Adrenal gland (tissue), 19 donors: ENCODE measurements at regions of chr12 and their contacts with region 1.

Region 1: GRCh38 chr12:104314242-104314614 is 10.7 kb downstream of the EID3 start:
- DNase-seq: no peak
- H3K4me3 ChIP-seq: no peak overlapping the region
- H3K27ac ChIP-seq: no peak overlapping the region
- H3K4me1 ChIP-seq: peaks cover 0 to 14% of the 10 kb centered on the region in 2 donors
- H3K27me3 ChIP-seq: no peaks in the 10 kb centered on the region
- CTCF ChIP-seq: no peak
- POLR2A ChIP-seq: no peak

Region 2: GRCh38 chr12:105138248-105138647 is 824.0 kb after region 1 on chr12:
- intact Hi-C with region 1: loop called in 1 of 2 experiments (anchors 5 kb)
- DNase-seq: no peak
- H3K4me3 ChIP-seq: no peak overlapping the region
- H3K27ac ChIP-seq: no peak overlapping the region
- H3K4me1 ChIP-seq: no peaks in the 10 kb centered on the region
- H3K27me3 ChIP-seq: no peaks in the 10 kb centered on the region
- CTCF ChIP-seq: no peak
- POLR2A ChIP-seq: no peak